Activated CD4-positive, alpha-beta T cell treated with anti-CD3 and anti-CD28 coated beads, Interleukin-2, amount 10 ng/mL, durations not matched to agents 24 days and 14 days (primary cell): ENCODE measurements at regions of chr17 and their contacts with region 1.

Region 1: GRCh38 chr17:4997302-4998026 is at the starts of genes INCA1 and KIF1C:
- DNase-seq: peak; percentile 98
- H3K4me3 Mint-ChIP-seq: peak within 1 kb of the TSS; percentile 89
- H3K27ac Mint-ChIP-seq: peak within 1 kb of the TSS; percentile 82
- H3K4me1 Mint-ChIP-seq: peaks cover 23% of the 10 kb centered on the region
- H3K27me3 Mint-ChIP-seq: peaks cover 6% of the 10 kb centered on the region
- total RNA-seq, gene INCA1: 0.56 and 0.69 TPM in 2 replicates
- total RNA-seq, gene KIF1C: 62.3 TPM in 2 replicates

Region 2: DNA sequence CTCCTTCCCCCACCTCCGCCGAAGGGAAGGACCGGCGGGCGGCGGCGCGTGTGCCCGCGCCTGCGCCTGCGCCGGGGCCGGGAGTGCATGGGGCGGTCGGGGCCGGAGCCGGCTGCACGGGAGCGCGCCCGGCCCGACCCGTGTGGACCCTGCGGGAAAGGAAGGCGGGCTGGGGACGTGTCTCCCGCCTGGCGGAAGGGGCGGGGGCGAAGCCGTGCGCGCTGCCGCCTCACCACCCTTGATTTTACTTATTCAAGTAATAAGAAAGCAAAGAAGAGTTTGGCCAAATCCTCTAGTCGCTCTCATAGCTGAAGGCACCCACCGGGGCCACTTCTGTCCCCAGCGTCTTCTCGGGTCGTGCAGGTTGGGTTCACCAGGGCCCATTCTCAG is 48.5 kb before region 1 on chr17:
- intact Hi-C with region 1: loop called (anchors 2 kb)
- DNase-seq: peak; percentile 94
- H3K4me3 Mint-ChIP-seq: peak overlapping the region; percentile 95
- H3K27ac Mint-ChIP-seq: peak overlapping the region; percentile 99
- H3K4me1 Mint-ChIP-seq: peaks cover 44% of the 10 kb centered on the region
- H3K27me3 Mint-ChIP-seq: no peaks in the 10 kb centered on the region

Region 3: DNA sequence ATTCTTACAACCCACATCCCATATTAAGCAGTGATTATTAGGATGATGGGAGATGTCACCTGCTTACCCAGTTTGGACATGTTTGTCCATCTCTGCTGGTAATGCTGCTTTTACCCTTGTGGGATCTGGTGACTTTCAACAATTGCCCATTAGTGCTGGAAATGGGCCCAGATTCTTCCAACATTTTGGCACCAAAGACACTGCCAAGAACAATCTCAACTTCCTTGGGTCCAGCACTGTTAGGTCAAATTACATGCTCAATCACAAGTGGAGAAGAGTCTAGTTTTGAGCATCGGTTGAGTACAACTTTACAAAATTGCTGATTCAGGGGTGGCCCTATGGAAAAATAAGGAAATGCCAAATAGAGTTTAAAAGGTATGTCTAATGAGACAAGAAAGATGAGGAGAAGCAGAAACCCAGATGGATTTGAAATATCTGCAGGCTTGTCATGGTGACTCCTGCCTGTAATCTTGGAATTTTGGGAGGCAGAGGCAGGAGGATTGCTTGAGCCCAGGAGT is 67.8 kb after region 1 on chr17:
- intact Hi-C with region 1: no loop called
- DNase-seq: no peak
- H3K4me3 Mint-ChIP-seq: no peak overlapping the region
- H3K27ac Mint-ChIP-seq: no peak overlapping the region
- H3K4me1 Mint-ChIP-seq: peaks cover 2% of the 10 kb centered on the region
- H3K27me3 Mint-ChIP-seq: no peaks in the 10 kb centered on the region